GM12878 (cell line): ENCODE measurements at regions of chr1 and their contacts with region 1.

Region 1: DNA sequence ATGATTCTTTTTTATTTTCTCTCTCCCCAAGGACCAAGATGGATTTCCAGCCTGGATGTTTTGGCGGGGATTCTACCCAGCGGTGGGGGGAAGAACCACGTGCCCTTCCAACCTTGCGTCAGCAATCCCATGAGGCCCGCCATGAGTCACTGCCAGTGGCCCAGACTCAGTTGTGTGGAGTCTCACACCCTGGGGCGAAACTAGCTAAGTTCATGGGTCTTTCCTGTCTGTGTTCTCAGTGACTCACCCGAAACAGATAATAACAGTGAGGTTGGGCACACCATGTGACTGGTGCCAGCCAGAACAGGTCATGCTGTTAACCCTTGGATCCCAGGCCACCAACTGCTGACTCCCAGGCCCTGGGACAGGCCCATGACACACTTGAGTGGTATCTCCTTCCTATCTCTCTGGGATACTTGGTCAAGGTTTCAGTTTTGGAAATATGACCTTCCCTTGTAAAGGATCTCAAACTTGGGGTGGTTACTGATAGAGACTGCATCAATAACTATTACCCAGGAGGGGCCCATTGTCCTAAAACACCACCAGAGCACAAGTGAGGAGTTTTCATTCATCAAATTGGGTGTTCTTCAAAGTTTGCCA is 98.0 kb upstream of the DUSP10 start:
- DNase-seq: peak; percentile 94
- ATAC-seq: peak; percentile 93
- H3K4me3 ChIP-seq: no peak overlapping the region
- H3K27ac ChIP-seq: peak overlapping the region; percentile 45; the same call in 1 of the 2 replicates
- H3K4me1 ChIP-seq: peaks cover 42% of the 10 kb centered on the region
- H3K27me3 ChIP-seq: no peaks in the 10 kb centered on the region
- CTCF ChIP-seq: no peak
- EP300 ChIP-seq: peak; percentile 97
- POLR2A ChIP-seq: no peak
- RAD21 ChIP-seq: no peak

Region 2: DNA sequence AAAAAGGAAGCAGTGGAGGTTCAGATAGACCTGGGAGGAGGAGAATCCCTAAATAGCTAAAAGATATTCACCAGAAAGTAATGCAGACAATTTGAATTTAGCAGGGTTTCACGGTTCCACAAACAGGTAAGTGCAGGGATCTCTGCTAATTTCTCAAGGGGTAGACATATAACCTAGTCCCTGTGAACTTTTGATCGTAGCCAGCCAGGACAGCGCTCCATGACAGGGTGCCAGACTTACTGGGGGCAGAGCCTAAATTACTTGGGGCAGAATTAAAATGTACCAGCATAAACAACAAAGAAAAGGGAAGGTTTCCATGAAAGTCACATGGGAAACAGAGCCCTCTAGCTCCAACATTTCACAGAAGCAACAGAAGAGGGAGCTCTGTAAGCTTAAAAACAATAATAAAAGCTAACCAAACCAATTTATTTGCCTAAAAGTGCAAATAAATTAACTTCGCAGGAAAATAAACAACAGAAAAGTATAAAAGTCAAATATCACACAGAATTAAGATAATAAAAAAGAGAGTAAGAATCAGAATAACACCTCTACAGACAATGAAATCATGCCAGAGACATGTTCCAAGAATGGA is 296.3 kb before region 1 on chr1:
- CTCF ChIA-PET with region 1: interaction called, 6 read pairs
- POLR2A ChIA-PET with region 1: no interaction called
- RAD21 ChIA-PET with region 1: interaction called, 8 read pairs
- SMC1A ChIA-PET with region 1: interaction called, 3 read pairs
- in situ Hi-C with region 1: no loop called
- intact Hi-C with region 1: loop called (anchors 10 kb)
- DNase-seq: no peak
- ATAC-seq: peak; percentile 64
- H3K4me3 ChIP-seq: no peak overlapping the region
- H3K27ac ChIP-seq: no peak overlapping the region
- H3K4me1 ChIP-seq: no peaks in the 10 kb centered on the region
- H3K27me3 ChIP-seq: no peaks in the 10 kb centered on the region
- CTCF ChIP-seq: peak; percentile 39 to 57 (median 53); a peak in 5 of 6 replicates
- EP300 ChIP-seq: no peak
- POLR2A ChIP-seq: no peak
- RAD21 ChIP-seq: peak; percentile 66

Region 3: GRCh38 chr1:221761354-221762002 is 78.4 kb before region 1 on chr1:
- CTCF ChIA-PET with region 1: interaction called, 4 read pairs
- POLR2A ChIA-PET with region 1: no interaction called
- RAD21 ChIA-PET with region 1: interaction called, 15 read pairs
- SMC1A ChIA-PET with region 1: interaction called, 10 read pairs
- in situ Hi-C with region 1: no loop called
- intact Hi-C with region 1: no loop called
- DNase-seq: peak; percentile 91
- ATAC-seq: peak; percentile 80
- H3K4me3 ChIP-seq: peak overlapping the region; percentile 26; the same call in 1 of the 2 replicates
- H3K27ac ChIP-seq: peak overlapping the region; percentile 90
- H3K4me1 ChIP-seq: peaks cover 64% of the 10 kb centered on the region
- H3K27me3 ChIP-seq: no peaks in the 10 kb centered on the region
- CTCF ChIP-seq: no peak
- EP300 ChIP-seq: peak in 1 of 2 experiments; percentile 13; a peak in 1 of 4 replicates
- POLR2A ChIP-seq: 0 out of 2 replicates have a peak, but pooled peaks have one; percentile 26
- RAD21 ChIP-seq: 0 out of 2 replicates have a peak, but pooled peaks have one; percentile 6

Region 4: DNA sequence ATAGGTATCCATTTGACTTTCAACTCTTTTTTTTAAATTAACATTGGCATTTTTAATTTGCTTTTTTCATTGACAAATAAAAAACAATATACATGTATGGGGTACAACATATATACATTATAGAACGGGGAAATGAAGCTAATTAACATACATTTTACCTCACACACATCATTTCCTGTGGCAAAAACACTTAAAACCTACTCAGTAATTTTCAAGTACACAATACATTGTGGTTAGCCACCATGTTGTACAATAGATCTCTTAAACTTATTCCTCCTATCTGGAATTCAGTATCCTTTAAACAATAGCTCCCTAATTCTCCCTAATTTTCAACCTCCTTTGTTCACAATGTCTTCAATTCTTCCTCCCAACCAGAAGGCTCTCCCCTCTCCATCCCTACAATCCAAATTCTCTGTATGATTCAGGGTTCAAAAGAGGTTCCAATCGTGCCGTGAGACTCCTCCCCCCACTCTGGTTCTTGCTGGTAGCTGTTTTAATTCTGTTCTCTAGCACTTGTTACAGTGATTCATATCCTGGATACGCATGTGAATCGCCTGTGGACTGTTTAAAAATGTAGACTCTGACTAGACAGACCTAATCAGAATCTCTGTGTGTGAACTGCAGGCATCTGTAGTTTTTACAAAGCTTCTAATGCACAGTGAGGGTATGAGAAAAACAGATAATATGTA is 10.4 kb before region 1 on chr1:
- CTCF ChIA-PET with region 1: interaction called, 6 read pairs
- POLR2A ChIA-PET with region 1: interaction called, 6 read pairs
- RAD21 ChIA-PET with region 1: interaction called, 3 read pairs
- SMC1A ChIA-PET with region 1: interaction called, 17 read pairs
- in situ Hi-C with region 1: no loop called
- intact Hi-C with region 1: no loop called
- DNase-seq: no peak
- ATAC-seq: peak; percentile 82
- H3K4me3 ChIP-seq: no peak overlapping the region
- H3K27ac ChIP-seq: no peak overlapping the region
- H3K4me1 ChIP-seq: peaks cover 8% of the 10 kb centered on the region
- H3K27me3 ChIP-seq: no peaks in the 10 kb centered on the region
- CTCF ChIP-seq: no peak
- EP300 ChIP-seq: no peak
- POLR2A ChIP-seq: no peak
- RAD21 ChIP-seq: no peak

Region 5: DNA sequence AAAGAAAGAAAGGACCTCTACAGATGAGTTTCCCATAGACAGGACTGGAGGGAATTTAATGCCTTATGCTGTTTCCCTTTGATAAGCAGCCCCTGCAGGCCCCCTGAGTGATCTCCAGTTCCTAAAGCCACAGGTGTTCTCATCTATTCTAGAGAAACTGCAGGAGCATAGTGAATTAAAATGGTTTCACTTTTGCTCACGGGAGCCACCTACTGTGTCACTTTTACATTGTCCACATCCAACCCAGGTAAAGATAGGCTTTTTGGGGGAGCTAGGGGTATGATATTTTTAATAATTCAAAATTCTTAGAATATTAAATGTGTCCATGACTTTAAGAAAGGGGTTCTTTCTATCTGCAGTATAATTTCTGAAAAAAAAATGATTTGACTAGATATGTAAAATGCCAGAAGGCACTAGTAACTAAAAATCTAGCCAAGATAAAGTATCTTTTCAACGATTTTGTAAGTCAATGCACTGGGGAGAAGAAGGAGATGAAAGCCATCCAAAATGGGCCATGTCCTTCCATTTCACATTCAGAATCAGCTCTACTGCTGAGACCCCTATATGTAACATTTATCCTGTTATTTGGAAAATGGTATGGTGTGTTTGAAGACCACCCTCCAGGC is 169.3 kb after region 1 on chr1:
- CTCF ChIA-PET with region 1: interaction called, 3 read pairs
- POLR2A ChIA-PET with region 1: interaction called, 5 read pairs
- RAD21 ChIA-PET with region 1: interaction called, 4 read pairs
- SMC1A ChIA-PET with region 1: interaction called, 14 read pairs
- in situ Hi-C with region 1: no loop called
- intact Hi-C with region 1: loop called (anchors 5 kb)
- DNase-seq: peak; percentile 36
- ATAC-seq: peak; percentile 95
- H3K4me3 ChIP-seq: no peak overlapping the region
- H3K27ac ChIP-seq: no peak overlapping the region
- H3K4me1 ChIP-seq: no peaks in the 10 kb centered on the region
- H3K27me3 ChIP-seq: no peaks in the 10 kb centered on the region
- CTCF ChIP-seq: peak; percentile 45 to 59 (median 48); a peak in 5 of 6 replicates
- EP300 ChIP-seq: no peak
- POLR2A ChIP-seq: no peak
- RAD21 ChIP-seq: peak; percentile 74